ENCODE measurements at regions of chrX and their contacts with region 1.

Region 1: DNA sequence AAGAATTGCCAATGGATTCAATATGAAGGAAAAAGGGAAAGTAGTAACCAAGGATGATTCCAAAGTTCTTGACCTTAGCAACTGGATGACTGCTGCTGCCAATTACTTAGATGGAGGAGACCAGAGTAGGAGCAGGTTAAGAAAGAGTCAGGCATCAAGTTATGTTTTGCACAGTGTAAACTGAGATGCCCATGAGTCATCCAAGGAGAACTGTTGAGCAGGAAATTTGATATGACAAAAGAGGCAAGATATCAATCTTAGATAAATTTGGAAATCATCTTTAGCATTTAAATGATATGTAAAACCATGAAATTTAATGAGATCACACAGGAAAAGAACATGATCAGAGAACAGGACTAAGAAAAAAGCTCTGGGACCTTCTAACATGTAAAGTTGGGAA is 361.3 kb downstream of the OPHN1 start:
- DNase-seq: no peak
- ATAC-seq: no peak
- H3K4me3 ChIP-seq: no peak overlapping the region
- H3K27ac ChIP-seq: no peak overlapping the region
- H3K4me1 ChIP-seq: no peaks in the 10 kb centered on the region
- H3K27me3 ChIP-seq: no peaks in the 10 kb centered on the region
- CTCF ChIP-seq: no peak

Region 2: DNA sequence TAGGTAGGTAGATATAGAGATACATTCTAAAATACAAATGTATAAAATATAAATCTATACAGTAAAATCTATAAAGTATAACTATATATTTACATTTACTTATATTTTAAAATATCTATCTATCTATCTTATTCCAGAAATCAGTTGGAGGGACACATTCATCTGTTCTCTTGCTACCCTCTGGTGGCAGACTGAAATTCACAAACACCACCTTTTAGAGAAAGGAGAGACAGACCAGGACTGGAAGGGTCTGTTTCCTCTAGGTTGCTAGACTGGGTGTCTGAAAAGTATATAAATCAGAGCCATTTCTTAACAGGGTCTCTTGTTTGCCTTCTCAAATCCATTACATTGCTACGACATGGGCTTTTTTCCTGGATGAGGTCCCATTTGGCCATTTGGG is 18.3 kb after region 1 on chrX:
- CTCF ChIA-PET with region 1: no interaction called
- POLR2A ChIA-PET with region 1: interaction called, 12 read pairs
- in situ Hi-C with region 1: no loop called
- intact Hi-C with region 1: no loop called
- DNase-seq: no peak
- ATAC-seq: no peak
- H3K4me3 ChIP-seq: no peak overlapping the region
- H3K27ac ChIP-seq: no peak overlapping the region
- H3K4me1 ChIP-seq: no peaks in the 10 kb centered on the region
- H3K27me3 ChIP-seq: no peaks in the 10 kb centered on the region
- CTCF ChIP-seq: no peak

Region 3: DNA sequence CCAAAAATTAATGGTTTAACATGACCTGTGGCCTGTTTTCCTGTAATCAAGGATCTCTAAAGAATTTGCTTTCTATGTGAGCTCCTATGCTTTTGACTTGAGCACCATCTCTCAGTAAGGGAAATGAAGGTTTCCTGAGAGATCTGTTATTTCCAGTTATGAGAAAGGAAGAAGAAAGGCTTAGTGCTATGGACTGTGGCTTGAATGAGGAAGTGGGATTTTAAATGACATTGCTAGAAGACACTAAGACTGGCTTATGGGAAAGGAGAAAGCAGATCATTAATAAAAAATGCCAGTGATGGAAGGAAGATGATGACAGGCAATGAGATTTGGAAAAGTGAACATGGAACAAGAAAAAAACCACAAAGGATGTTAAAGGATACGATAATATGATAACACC is 75.8 kb after region 1 on chrX:
- CTCF ChIA-PET with region 1: no interaction called
- POLR2A ChIA-PET with region 1: no interaction called
- in situ Hi-C with region 1: no loop called
- intact Hi-C with region 1: no loop called
- DNase-seq: no peak
- ATAC-seq: no peak
- H3K4me3 ChIP-seq: no peak overlapping the region
- H3K27ac ChIP-seq: no peak overlapping the region
- H3K4me1 ChIP-seq: no peaks in the 10 kb centered on the region
- H3K27me3 ChIP-seq: no peaks in the 10 kb centered on the region
- CTCF ChIP-seq: no peak